ENCODE measurements at regions of chr6 and their contacts with region 1.

Region 1: GRCh38 chr6:159134701-159135364 is 34.4 kb upstream of the FNDC1 start:
- DNase-seq: peak; percentile 64 to 96
- H3K4me3 ChIP-seq: no peak overlapping the region
- H3K27ac ChIP-seq: no peak overlapping the region
- H3K4me1 ChIP-seq: no peaks in the 10 kb centered on the region
- H3K27me3 ChIP-seq: no peaks in the 10 kb centered on the region
- CTCF ChIP-seq: peak; percentile 73 to 96 (median 94)
- EP300 ChIP-seq: no peak
- POLR2A ChIP-seq: no peak
- RAD21 ChIP-seq: peak; percentile 92 to 93

Region 2: GRCh38 chr6:158879180-158879579 is 255.7 kb before region 1 on chr6:
- CTCF ChIA-PET with region 1: no interaction called
- POLR2A ChIA-PET with region 1: no interaction called
- DNase-seq: no peak
- H3K4me3 ChIP-seq: no peak overlapping the region
- H3K27ac ChIP-seq: no peak overlapping the region
- H3K4me1 ChIP-seq: peaks cover 0 to 10% (median 4%) of the 10 kb centered on the region in 4 experiments; a peak in 4 of 7 replicates
- H3K27me3 ChIP-seq: no peaks in the 10 kb centered on the region
- CTCF ChIP-seq: no peak
- EP300 ChIP-seq: no peak
- POLR2A ChIP-seq: no peak
- RAD21 ChIP-seq: no peak

Region 3: GRCh38 chr6:159008656-159009288 is 126.1 kb before region 1 on chr6:
- CTCF ChIA-PET with region 1: interaction called, 62 read pairs
- POLR2A ChIA-PET with region 1: no interaction called
- DNase-seq: no peak
- H3K4me3 ChIP-seq: no peak overlapping the region
- H3K27ac ChIP-seq: no peak overlapping the region
- H3K4me1 ChIP-seq: no peaks in the 10 kb centered on the region
- H3K27me3 ChIP-seq: no peaks in the 10 kb centered on the region
- CTCF ChIP-seq: peak in 2 of 3 experiments; percentile 15 to 43; a peak in 2 of 4 replicates
- EP300 ChIP-seq: no peak
- POLR2A ChIP-seq: no peak
- RAD21 ChIP-seq: peak; percentile 48 to 51

Region 4: DNA sequence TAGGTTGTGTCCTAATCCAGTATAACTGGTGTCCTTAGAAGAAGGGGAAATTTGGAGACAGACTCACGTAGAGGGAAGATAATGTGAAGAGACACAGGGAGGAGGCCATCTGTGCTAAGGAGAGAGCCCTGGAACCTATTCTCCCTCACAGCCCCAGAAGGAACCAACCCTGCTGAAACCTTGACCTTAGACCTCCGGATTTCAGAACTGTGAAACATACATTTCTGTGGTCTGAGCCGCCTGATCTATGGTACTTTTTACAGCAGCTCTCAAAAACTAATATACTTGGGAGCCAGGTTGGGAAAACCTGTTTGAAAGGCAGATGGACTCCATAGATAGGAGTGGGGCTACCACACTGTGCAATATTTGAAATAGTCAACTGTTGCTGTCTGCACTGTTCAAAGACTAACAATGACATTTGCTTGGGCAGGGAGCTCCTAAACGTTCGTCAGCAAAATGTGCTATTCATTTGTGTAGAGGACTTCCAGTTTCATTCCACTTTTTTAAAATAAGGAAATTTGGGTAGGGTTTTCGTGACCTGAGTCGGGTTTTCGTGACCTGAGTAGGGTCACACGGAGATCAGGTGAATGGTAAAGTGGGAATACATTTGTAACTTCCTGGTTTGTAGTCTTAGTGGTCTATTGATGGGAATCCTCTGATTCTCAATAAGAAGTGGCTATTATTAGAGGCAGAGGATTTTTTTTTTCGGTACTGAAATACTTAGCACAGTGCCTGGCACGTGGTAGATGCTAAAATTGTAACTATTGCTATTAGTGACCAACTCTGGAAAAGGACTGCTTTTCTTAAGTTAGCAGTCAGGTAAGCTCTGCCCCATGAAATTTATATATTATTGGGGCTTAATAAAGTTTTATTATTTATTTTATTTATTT is 101.4 kb before region 1 on chr6:
- CTCF ChIA-PET with region 1: interaction called, 11 read pairs
- POLR2A ChIA-PET with region 1: no interaction called
- DNase-seq: no peak
- H3K4me3 ChIP-seq: no peak overlapping the region
- H3K27ac ChIP-seq: no peak overlapping the region
- H3K4me1 ChIP-seq: no peaks in the 10 kb centered on the region
- H3K27me3 ChIP-seq: no peaks in the 10 kb centered on the region
- CTCF ChIP-seq: no peak
- EP300 ChIP-seq: no peak
- POLR2A ChIP-seq: no peak
- RAD21 ChIP-seq: no peak

Region 5: DNA sequence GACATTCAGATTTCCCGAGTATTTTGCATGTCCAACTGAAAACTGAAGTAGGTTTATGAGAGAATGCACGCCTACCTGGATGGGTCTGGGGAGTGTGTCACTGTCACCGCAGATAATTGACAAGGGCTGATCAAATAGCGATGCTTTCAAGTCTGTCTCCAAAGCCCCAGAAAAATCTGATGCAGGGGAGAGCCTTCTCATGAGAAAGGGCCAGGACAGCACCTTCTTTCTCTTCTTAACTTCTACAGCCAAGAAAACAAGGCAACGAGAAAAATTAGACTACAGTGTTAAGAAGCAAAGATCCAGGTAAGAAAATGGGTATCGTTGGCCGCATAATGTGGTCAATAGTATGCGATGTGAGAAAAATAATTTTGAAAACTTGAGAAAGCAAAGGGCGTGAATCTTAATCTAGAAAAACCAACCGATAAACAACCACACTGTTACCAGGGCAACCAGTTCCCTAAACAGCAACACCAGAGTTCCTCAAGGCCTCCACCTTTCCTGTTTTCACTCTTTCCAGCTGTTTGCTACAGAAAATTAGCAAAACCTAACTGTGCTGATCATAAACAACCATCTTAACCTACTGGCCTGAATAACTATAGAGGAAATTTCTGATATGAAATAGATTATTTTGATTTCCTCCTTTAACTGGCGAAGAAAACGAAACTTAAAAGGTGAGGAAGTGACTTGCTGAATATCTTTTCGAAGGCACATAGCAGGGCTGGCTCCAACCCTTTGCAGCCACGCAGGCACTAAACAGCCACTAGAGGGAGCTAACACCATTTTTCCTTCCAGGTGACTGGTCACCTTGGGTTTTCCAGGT is 92.6 kb before region 1 on chr6:
- CTCF ChIA-PET with region 1: interaction called, 31 read pairs
- POLR2A ChIA-PET with region 1: no interaction called
- DNase-seq: peak; percentile 59 to 73
- H3K4me3 ChIP-seq: peak overlapping the region in 1 of 4 experiments; percentile 24; a peak in 1 of 8 replicates
- H3K27ac ChIP-seq: peak overlapping the region; percentile 69
- H3K4me1 ChIP-seq: no peaks in the 10 kb centered on the region; a peak in 1 of 7 replicates
- H3K27me3 ChIP-seq: no peaks in the 10 kb centered on the region
- CTCF ChIP-seq: peak; percentile 88 to 97 (median 92)
- EP300 ChIP-seq: no peak
- POLR2A ChIP-seq: no peak
- RAD21 ChIP-seq: peak; percentile 83 to 87

Region 6: GRCh38 chr6:159062564-159062945 is 72.3 kb before region 1 on chr6:
- CTCF ChIA-PET with region 1: interaction called, 10 read pairs
- POLR2A ChIA-PET with region 1: no interaction called
- DNase-seq: no peak
- H3K4me3 ChIP-seq: no peak overlapping the region
- H3K27ac ChIP-seq: no peak overlapping the region
- H3K4me1 ChIP-seq: no peaks in the 10 kb centered on the region
- H3K27me3 ChIP-seq: no peaks in the 10 kb centered on the region
- CTCF ChIP-seq: no peak
- EP300 ChIP-seq: no peak
- POLR2A ChIP-seq: no peak
- RAD21 ChIP-seq: no peak

Region 7: GRCh38 chr6:159151266-159151855 is 16.5 kb after region 1 on chr6:
- CTCF ChIA-PET with region 1: interaction called, 10 read pairs
- POLR2A ChIA-PET with region 1: interaction called, 3 read pairs
- DNase-seq: no peak
- H3K4me3 ChIP-seq: no peak overlapping the region
- H3K27ac ChIP-seq: no peak overlapping the region
- H3K4me1 ChIP-seq: no peaks in the 10 kb centered on the region
- H3K27me3 ChIP-seq: no peaks in the 10 kb centered on the region
- CTCF ChIP-seq: peak; percentile 61 to 71 (median 63)
- EP300 ChIP-seq: no peak
- POLR2A ChIP-seq: no peak
- RAD21 ChIP-seq: peak; percentile 27 to 49; a peak in 3 of 4 replicates

Region 8: GRCh38 chr6:159212028-159212427 is 77.2 kb after region 1 on chr6:
- CTCF ChIA-PET with region 1: no interaction called
- POLR2A ChIA-PET with region 1: no interaction called
- DNase-seq: no peak
- H3K4me3 ChIP-seq: no peak overlapping the region
- H3K27ac ChIP-seq: no peak overlapping the region
- H3K4me1 ChIP-seq: no peaks in the 10 kb centered on the region; a peak in 1 of 7 replicates
- H3K27me3 ChIP-seq: no peaks in the 10 kb centered on the region
- CTCF ChIP-seq: no peak
- EP300 ChIP-seq: no peak
- POLR2A ChIP-seq: no peak
- RAD21 ChIP-seq: no peak

Region 9: DNA sequence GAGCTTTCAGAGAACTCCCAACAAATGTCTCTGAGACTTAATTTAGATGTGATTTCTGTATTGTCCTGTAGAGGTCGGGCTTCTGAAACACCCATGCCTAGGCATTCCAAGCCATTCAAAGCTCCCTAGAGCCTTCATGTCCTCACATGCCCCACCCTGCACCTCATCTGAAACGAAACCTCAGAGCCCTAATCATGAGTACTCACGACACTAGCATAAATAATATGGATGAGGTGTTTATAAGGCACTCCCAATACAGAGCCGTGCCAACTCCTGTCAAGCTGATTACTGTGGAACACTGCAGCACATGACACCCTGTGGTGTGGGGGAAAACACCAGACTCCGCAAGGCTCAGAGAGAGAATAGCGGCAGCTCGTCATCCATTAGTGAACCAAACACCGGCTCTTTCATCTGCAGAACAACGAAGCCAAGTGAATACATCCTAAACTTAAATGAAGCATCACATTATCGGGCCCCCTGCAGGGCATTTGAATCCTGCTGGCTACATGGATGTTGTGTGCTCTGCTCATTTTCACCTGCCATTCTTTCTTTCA is 118.2 kb after region 1 on chr6:
- CTCF ChIA-PET with region 1: no interaction called
- POLR2A ChIA-PET with region 1: no interaction called
- DNase-seq: peak; percentile 21 to 54
- H3K4me3 ChIP-seq: no peak overlapping the region
- H3K27ac ChIP-seq: no peak overlapping the region
- H3K4me1 ChIP-seq: peaks cover 0 to 4% (median 2%) of the 10 kb centered on the region in 4 experiments; a peak in 3 of 7 replicates
- H3K27me3 ChIP-seq: no peaks in the 10 kb centered on the region
- CTCF ChIP-seq: peak; percentile 8 to 68 (median 46)
- EP300 ChIP-seq: no peak
- POLR2A ChIP-seq: no peak
- RAD21 ChIP-seq: peak; percentile 36 to 39; a peak in 3 of 4 replicates

Measured in H1 (cell line).